Activated CD4-positive, alpha-beta memory T cell treated with anti-CD3 and anti-CD28 coated beads, Interleukin-2, amount 10 ng/mL, durations not matched to agents 7 days and 5 days (primary cell): ENCODE measurements at regions of chr22 and their contacts with region 1.

Region 1: DNA sequence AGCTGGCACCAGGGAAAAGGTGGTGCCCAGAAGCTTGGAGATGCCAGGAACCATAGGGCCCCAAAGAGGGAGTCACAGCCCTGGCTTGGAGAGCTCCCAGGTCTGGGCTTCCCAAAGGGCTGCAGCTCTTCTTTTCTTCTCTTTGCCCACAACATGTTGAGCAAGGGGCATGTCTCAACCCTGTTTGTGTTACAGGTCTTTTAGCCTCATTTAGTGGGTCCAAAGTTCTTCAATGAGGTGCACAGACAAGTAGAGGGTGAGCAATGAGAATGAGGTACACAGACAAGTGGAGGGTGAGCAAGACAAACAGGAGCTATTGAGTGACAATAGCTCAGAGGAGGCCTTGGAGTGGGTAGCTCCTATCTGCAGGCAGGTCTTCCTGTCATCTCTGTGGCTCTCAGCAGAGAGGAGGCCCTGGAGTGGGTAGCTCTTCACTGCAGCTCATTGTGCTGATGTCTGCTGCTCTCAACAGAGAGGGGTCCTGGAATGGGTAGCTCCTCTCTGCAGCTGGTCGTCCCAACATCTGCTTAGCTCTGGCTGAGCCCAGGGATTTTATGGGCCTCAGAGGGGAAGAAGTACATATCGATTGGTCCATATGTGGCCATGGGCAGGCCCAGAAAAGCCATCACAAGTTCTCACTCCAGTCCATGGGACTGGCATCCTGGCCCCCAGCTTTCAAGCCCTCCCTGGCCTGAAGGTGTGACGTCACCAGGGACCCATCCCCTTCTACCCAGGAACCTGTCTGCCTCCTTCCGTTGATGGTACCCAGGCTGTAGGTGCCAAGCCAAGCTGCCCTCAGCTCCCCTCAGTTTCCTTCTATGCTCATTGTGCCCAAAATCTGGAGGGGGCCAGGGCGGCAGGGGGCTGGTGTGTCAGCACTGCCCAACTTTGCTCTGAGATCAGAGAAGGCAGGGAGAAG is 34.9 kb downstream of the WBP2NL start:
- DNase-seq: no peak
- H3K4me3 Mint-ChIP-seq: no peak overlapping the region
- H3K27ac Mint-ChIP-seq: no peak overlapping the region
- H3K4me1 Mint-ChIP-seq: peaks cover 23% of the 10 kb centered on the region
- H3K27me3 Mint-ChIP-seq: peaks cover 5% of the 10 kb centered on the region

Region 2: GRCh38 chr22:41998361-41999275 is 34.9 kb before region 1 on chr22 and contains the start of gene WBP2NL:
- CTCF ChIA-PET with region 1: no interaction called
- POLR2A ChIA-PET with region 1: interaction called, 13 read pairs
- DNase-seq: peak; percentile 92
- H3K4me3 Mint-ChIP-seq: peak within 1 kb of the TSS; percentile 98
- H3K27ac Mint-ChIP-seq: peak within 1 kb of the TSS; percentile 88
- H3K4me1 Mint-ChIP-seq: peaks cover 35% of the 10 kb centered on the region
- H3K27me3 Mint-ChIP-seq: peaks cover 2% of the 10 kb centered on the region
- total RNA-seq, gene WBP2NL: 2.0 to 2.3 TPM

Region 3: GRCh38 chr22:42070517-42071422 is 37.2 kb after region 1 on chr22 and contains the start of gene NAGA:
- CTCF ChIA-PET with region 1: no interaction called
- POLR2A ChIA-PET with region 1: interaction called, 17 read pairs
- DNase-seq: peak; percentile 95
- H3K4me3 Mint-ChIP-seq: peak within 1 kb of the TSS; percentile 88
- H3K27ac Mint-ChIP-seq: peak within 1 kb of the TSS; percentile 86
- H3K4me1 Mint-ChIP-seq: peaks cover 55% of the 10 kb centered on the region
- H3K27me3 Mint-ChIP-seq: no peaks in the 10 kb centered on the region
- total RNA-seq, gene NAGA: 33.7 to 35.0 TPM

Region 4: DNA sequence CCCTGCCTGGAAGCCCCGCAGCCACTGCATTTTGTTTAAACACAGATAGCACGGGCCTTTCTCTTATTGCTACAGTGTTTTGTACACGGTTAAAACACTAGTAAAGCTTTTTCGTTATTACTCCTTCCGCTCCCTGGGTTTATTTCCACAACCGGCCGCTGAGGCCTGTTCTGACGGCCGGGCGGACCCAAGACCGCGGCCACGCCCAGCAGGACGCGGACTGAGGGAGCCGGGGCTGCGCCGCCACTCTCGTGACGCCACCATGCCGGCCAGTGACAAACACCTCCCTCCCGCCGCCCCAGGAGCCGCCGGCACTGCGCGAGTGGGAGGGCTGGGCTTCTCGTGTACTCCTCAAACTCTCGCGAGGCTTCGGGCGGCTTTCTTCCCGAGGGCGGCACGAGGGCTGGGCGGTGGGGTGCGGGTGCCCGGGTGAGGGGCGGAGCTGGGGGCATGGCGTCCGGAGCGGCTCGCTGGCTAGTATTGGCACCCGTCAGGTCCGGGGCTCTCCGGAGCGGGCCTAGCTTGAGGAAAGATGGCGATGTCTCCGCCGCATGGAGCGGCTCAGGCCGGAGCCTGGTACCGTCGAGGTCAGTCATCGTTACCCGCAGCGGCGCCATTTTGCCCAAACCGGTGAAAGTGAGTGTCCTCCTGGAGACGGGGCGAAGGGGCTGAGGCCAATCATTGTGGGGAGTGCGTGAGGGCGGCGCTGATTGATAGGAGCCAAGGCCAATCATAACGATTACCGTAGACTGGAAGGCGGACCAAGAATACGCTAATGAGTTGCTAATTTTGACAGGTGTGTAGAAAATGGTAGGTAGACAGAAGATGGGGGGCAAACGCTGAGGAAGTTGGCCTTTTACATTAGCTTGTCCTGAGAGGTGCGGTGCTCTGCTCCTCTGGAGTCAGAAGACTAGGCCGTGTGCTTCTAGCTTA is 46.1 kb after region 1 on chr22 and contains the start of gene SMDT1:
- CTCF ChIA-PET with region 1: no interaction called
- POLR2A ChIA-PET with region 1: interaction called, 11 read pairs
- DNase-seq: peak; percentile 98
- H3K4me3 Mint-ChIP-seq: peak within 1 kb of the TSS; percentile 95
- H3K27ac Mint-ChIP-seq: peak within 1 kb of the TSS; percentile 92
- H3K4me1 Mint-ChIP-seq: peaks cover 42% of the 10 kb centered on the region
- H3K27me3 Mint-ChIP-seq: no peaks in the 10 kb centered on the region
- total RNA-seq, gene SMDT1: 92.7 to 98.1 TPM